ENCODE measurements at regions of chr17 and their contacts with region 1.

Region 1: DNA sequence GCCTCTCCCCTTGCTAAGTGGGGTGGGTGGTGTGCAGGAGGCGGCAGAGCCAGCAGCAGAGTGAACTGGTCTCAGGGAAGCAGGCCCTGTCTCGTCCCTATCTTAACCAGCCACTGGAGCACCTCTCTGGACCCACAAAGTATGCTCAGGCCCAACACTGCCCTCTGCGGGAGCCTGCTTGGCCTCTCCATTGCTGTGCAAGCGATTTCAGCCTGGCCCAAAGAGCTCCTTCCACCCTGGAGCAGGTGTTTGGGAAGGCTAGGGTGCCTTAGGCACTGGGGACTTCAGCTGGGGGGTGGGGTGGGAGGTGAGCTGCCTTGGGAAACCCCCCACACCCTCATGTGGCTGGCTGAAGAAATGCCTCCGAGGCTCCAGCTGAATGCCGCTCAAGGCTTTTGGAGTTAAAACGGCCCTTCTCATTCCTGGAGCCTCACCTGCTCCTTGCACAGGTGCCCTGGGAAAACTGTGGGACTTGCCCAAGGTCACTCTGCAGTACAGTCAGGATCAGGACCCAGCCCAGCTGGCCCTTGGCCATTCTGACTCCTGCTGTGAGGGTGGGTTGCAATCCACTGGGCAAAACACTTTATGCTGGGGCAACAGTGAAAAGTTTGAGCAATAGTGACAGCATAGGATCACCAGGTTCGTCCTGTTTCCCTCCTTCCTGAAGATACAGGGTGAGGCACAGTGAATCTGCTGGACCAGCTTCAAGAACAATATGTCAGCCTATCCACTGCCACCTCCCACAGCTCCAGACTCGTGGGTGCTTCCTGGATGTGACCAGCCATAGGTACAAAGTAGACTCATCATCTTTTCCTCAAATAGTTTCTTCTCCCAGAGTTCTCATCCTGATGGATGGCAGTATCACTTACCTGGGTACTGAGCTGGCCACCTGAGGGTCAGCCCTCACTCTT is 5.9 kb upstream of the UBE2O start:
- DNase-seq: peak; percentile 64
- ATAC-seq: peak; percentile 92
- H3K4me3 ChIP-seq: no peak overlapping the region
- H3K27ac ChIP-seq: no peak overlapping the region
- H3K4me1 ChIP-seq: peaks cover 4% of the 10 kb centered on the region; the same call in 1 of the 2 replicates
- H3K27me3 ChIP-seq: no peaks in the 10 kb centered on the region
- CTCF ChIP-seq: peak; percentile 77
- POLR2A ChIP-seq: no peak
- RAD21 ChIP-seq: peak; percentile 80

Region 2: DNA sequence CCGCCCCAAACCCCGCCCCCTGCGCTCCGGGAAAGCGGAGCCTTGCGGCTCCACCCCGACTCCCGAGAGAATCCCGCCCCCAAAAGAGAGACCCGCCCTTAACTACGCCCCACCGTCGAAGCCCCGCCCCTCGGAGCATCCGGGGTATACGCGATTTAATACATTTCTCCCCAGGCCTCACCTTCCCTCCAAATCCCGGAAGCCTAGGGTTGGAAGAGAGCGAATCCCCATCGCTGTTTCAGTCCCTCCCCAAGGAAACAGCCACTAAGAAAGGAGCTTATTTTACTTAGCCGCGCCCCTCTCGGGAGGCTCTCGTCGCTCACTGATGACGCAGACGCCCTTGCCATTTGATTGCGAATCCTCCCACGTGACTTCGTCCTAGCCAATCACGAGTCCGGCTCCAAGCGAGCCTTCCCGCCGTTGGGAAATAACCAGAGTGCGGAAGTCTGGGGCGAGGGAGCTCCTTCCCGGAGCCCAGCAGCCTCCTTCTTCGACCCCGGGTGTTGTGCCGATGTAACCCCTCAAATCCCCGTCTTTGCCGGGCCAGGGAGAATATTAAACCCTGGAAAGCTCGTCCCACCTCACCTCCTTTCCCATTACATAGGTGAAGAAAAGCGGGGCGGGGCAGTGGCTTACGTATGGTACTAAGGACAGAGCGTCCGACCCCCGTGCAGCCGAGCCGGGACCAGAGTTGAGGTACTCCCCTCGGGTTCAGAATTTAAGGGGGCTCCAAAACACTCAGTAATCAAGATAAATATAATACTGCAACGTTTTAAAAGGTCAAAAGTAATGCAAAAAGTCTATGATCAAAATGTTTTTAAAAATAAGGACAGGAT is 1585.6 kb before region 1 on chr17:
- CTCF ChIA-PET with region 1: no interaction called
- POLR2A ChIA-PET with region 1: no interaction called
- dilution Hi-C with region 1: no loop called
- in situ Hi-C with region 1: no loop called
- intact Hi-C with region 1: no loop called
- DNase-seq: peak; percentile 100
- ATAC-seq: peak; percentile 94
- H3K4me3 ChIP-seq: peak overlapping the region; percentile 73
- H3K27ac ChIP-seq: peak overlapping the region; percentile 82
- H3K4me1 ChIP-seq: peaks cover 11% of the 10 kb centered on the region
- H3K27me3 ChIP-seq: peaks cover 5% of the 10 kb centered on the region; the same call in 1 of the 2 replicates
- CTCF ChIP-seq: no peak
- POLR2A ChIP-seq: peak; percentile 97
- RAD21 ChIP-seq: no peak

Region 3: DNA sequence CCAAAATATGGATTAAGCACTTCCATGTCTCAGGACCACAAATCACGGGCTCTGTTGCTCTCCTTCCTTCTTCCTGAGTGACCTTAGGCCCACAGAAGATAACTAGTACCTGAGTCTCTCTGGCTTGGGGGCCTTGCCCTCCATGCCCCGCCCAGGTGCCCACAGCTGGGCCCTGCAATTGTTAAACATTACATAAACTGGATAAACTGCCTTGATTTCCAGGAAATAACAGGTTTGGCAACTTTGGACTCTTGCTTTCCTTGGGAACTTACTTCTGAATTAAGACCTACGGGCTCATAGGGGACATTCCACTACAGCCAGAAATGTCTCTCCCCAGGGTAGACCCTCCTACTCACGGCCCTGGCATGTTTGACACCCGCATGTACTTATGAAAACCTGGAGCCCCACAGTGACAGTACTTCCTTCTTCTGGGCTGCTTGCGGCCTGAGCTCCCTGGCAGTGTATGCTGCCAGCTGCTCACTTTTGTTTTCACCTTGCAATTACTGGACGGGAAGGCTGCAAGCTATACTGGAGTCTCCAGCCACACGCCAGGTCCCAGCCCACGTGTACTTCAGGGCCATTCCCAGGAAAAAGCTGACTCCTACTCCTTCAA is 196.0 kb before region 1 on chr17:
- CTCF ChIA-PET with region 1: no interaction called
- POLR2A ChIA-PET with region 1: no interaction called
- dilution Hi-C with region 1: no loop called
- in situ Hi-C with region 1: no loop called
- intact Hi-C with region 1: no loop called
- DNase-seq: no peak
- ATAC-seq: no peak
- H3K4me3 ChIP-seq: no peak overlapping the region
- H3K27ac ChIP-seq: no peak overlapping the region
- H3K4me1 ChIP-seq: peaks cover 6% of the 10 kb centered on the region
- H3K27me3 ChIP-seq: no peaks in the 10 kb centered on the region
- CTCF ChIP-seq: no peak
- POLR2A ChIP-seq: no peak
- RAD21 ChIP-seq: no peak

Region 4: GRCh38 chr17:76408052-76408849 is 50.6 kb before region 1 on chr17:
- CTCF ChIA-PET with region 1: interaction called, 8 read pairs
- POLR2A ChIA-PET with region 1: no interaction called
- dilution Hi-C with region 1: no loop called
- in situ Hi-C with region 1: loop called (anchors 5 kb)
- intact Hi-C with region 1: loop called (anchors 1 kb)
- DNase-seq: peak; percentile 39
- ATAC-seq: peak; percentile 42; the same call in 1 of the 2 replicates
- H3K4me3 ChIP-seq: no peak overlapping the region
- H3K27ac ChIP-seq: no peak overlapping the region
- H3K4me1 ChIP-seq: peaks cover 7% of the 10 kb centered on the region; the same call in 1 of the 2 replicates
- H3K27me3 ChIP-seq: no peaks in the 10 kb centered on the region
- CTCF ChIP-seq: peak; percentile 76
- POLR2A ChIP-seq: no peak
- RAD21 ChIP-seq: peak; percentile 84

Region 5: DNA sequence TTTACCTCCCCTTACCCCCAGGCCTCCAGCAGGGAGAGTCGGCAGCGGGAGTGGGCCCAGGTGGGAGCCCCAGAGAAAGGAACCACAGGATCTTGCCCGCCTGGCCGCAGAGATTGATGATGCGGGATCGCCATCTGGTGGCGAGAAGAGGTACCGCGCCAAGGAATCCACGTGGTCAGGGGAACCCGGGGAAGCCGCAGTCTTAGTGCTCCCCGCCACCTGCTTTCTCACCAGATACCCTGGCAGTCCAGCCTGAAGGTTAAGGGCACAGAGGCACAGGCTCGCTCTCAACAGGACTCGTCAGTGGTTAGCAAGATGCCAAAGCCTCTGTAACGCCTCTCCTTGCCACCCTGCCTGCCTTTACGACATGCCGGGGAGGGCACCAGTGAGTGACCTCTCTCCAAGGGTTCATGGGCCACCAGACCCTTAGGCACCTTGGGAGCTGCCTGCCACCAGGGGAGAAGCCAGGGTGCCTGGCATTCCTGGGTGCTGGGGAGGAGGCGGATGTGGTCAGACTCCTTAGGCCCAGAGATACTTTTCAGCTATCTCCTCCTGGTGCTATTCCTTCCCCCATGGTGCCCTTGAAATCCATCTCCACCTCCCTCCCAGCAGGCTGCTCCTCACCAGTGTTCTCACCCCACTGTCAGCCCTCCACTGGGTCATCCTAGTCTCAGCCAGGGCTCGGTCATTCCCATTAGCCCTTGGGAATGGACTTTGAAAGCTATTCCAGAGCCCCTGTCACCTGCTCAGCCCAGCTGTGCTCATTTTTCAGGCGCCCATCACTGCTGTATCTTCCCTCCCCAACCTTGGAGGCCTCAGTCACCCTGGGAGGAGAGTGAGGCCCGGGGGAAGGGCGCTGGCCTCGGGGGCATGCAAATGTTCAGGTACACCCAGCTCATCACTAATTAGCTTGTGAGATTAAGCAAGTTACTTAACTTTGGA is 47.8 kb after region 1 on chr17:
- CTCF ChIA-PET with region 1: interaction called, 3 read pairs
- POLR2A ChIA-PET with region 1: no interaction called
- dilution Hi-C with region 1: no loop called
- in situ Hi-C with region 1: no loop called
- intact Hi-C with region 1: loop called (anchors 1 kb)
- DNase-seq: peak; percentile 54
- ATAC-seq: peak; percentile 88
- H3K4me3 ChIP-seq: no peak overlapping the region
- H3K27ac ChIP-seq: no peak overlapping the region
- H3K4me1 ChIP-seq: peaks cover 13% of the 10 kb centered on the region
- H3K27me3 ChIP-seq: peaks cover 13% of the 10 kb centered on the region
- CTCF ChIP-seq: peak; percentile 97
- POLR2A ChIP-seq: peak; percentile 42; the same call in 1 of the 2 replicates
- RAD21 ChIP-seq: peak; percentile 97

Region 6: DNA sequence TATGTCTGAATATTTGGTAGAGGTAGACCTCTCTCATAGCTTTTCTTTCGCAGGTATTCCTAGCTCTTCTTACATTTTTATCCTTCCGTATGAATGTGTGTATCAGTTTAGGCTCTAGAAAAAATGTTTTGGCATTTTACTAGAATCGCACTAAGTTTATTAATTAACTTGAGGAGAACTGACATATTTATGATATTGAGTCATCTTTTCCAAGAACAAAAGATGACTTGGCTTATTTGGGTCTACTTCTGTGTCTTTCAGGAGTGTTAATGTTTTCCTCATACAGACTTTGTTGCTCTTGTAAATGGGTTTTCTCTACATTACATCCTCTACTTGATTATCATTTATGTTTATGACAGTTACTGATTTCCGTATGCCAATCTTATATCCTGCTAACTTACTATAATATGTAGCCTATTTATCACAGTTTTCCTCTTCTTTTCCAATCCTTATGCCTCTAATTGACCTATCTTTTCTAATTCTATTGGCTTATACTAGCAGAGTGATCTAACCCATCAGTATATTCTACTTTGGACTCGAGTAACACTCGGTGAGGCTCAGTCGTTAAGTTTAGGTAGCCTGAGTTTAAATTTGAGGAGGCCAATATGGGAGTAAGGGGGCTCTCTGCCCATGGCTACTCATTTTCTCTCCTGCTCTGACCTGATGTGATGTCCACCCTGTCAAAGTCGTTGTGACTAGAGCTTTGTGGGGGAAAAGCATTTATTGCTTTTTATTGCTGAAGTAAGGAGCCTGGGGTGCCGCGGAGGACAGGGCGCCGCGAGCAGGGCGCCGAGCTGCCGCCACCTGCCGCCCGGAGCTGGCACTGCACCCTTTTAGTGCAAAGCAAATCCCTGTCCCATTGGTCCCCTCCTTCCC is 164.7 kb after region 1 on chr17:
- CTCF ChIA-PET with region 1: no interaction called
- POLR2A ChIA-PET with region 1: no interaction called
- dilution Hi-C with region 1: no loop called
- in situ Hi-C with region 1: no loop called
- intact Hi-C with region 1: loop called (anchors 5 kb)
- DNase-seq: peak; percentile 60
- ATAC-seq: peak; percentile 100
- H3K4me3 ChIP-seq: no peak overlapping the region
- H3K27ac ChIP-seq: no peak overlapping the region
- H3K4me1 ChIP-seq: peaks cover 2% of the 10 kb centered on the region; the same call in 1 of the 2 replicates
- H3K27me3 ChIP-seq: peaks cover 17% of the 10 kb centered on the region
- CTCF ChIP-seq: peak; percentile 94
- POLR2A ChIP-seq: no peak
- RAD21 ChIP-seq: peak; percentile 92

Region 7: GRCh38 chr17:76681222-76682137 is 222.6 kb after region 1 on chr17:
- CTCF ChIA-PET with region 1: no interaction called
- POLR2A ChIA-PET with region 1: no interaction called
- dilution Hi-C with region 1: no loop called
- in situ Hi-C with region 1: no loop called
- intact Hi-C with region 1: loop called (anchors 2 kb)
- DNase-seq: peak; percentile 63
- ATAC-seq: peak; percentile 78
- H3K4me3 ChIP-seq: no peak overlapping the region
- H3K27ac ChIP-seq: no peak overlapping the region
- H3K4me1 ChIP-seq: peaks cover 7% of the 10 kb centered on the region
- H3K27me3 ChIP-seq: no peaks in the 10 kb centered on the region
- CTCF ChIP-seq: peak; percentile 78
- POLR2A ChIP-seq: peak; percentile 23; the same call in 1 of the 2 replicates
- RAD21 ChIP-seq: peak; percentile 79

Measured in IMR-90 (cell line).